Calu3 (cell line): ENCODE measurements at regions of chr3 and their contacts with region 1.

Region 1: DNA sequence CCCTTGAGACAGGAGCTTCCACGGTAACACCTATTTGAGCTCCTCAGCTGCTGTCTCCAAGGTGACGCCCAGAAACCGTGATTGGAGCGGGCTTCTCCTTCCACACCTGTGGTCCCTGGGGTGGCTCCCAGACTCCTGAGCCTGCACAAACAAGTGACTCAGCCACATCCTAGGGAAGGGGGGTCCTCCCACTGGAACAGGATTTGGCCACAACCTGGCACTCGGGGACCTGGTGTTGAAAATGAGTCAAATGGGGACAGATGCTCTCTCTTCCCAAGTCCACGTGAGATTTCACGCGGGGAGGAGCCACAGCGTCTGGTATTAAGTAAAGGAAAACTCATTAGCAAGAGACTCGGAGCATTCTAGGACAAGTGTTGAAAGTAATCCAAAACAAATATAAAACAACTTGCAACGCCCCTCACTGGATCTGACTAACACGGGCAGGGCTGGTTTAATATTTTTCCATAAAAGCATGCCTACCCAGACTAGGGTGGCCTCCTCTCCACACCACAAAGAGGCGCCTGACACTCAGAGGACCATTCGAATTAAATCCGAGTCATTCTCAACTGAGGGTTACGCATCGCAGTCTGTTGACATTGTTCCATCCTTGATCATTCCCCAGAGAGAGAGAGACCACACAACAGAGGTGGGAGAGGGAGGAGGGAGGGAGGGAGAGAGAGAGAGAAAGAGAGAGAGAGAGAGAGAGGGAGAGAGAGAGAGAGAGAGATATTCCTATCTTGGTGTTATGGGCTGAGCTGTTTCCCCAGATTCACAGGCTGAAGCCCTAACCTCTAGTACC is 74.4 kb downstream of the MGLL start:
- DNase-seq: peak; percentile 80
- H3K4me3 Mint-ChIP-seq: peak overlapping the region; percentile 29
- H3K27ac Mint-ChIP-seq: peak overlapping the region; percentile 83
- H3K4me1 Mint-ChIP-seq: peaks cover 62% of the 10 kb centered on the region
- H3K27me3 Mint-ChIP-seq: no peaks in the 10 kb centered on the region
- CTCF ChIP-seq: no peak

Region 2: DNA sequence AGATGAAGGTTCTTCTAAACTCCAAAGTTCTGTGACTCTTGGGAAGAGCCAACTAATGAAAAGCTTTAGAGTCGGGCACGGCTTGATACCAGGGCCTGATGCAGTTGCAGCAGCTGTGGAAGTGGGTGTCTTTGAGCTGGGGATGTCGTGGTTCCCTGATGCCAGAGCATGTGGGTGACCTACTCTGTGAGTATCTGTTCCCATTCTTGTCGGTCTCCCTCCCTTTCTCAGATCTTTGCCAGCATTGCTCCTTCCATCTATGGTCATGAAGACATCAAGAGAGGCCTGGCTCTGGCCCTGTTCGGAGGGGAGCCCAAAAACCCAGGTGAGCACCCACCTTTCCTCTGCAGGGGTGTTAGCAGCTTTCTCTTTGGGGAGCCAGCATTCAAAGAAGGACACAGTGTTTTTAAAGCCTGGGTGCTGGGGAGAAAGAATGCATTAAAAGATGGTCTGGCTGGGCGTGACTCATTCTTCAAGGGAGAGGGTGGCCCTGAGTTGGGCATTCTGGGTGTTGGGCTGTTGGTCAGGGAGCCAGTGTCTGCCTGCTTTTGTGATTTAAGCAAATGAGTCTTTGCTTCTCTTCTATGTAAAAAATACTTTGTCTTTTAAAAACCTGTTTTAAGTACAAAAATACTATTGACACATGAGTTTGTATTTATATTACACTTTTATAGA is 132.2 kb before region 1 on chr3:
- CTCF ChIA-PET with region 1: no interaction called
- intact Hi-C with region 1: no loop called
- DNase-seq: no peak
- H3K4me3 Mint-ChIP-seq: no peak overlapping the region
- H3K27ac Mint-ChIP-seq: peak overlapping the region; percentile 13
- H3K4me1 Mint-ChIP-seq: peaks cover 8% of the 10 kb centered on the region
- H3K27me3 Mint-ChIP-seq: no peaks in the 10 kb centered on the region
- CTCF ChIP-seq: no peak

Region 3: GRCh38 chr3:127697551-127698240 is 50.2 kb before region 1 on chr3:
- CTCF ChIA-PET with region 1: interaction called, 6 read pairs
- intact Hi-C with region 1: loop called (anchors 5 kb)
- DNase-seq: peak; percentile 73
- H3K4me3 Mint-ChIP-seq: no peak overlapping the region
- H3K27ac Mint-ChIP-seq: peak overlapping the region; percentile 19
- H3K4me1 Mint-ChIP-seq: no peaks in the 10 kb centered on the region
- H3K27me3 Mint-ChIP-seq: no peaks in the 10 kb centered on the region
- CTCF ChIP-seq: no peak

Region 4: GRCh38 chr3:127817396-127817841 is 69.5 kb after region 1 on chr3:
- CTCF ChIA-PET with region 1: interaction called, 3 read pairs
- intact Hi-C with region 1: loop called (anchors 2 kb)
- DNase-seq: peak; percentile 77
- H3K4me3 Mint-ChIP-seq: peak overlapping the region; percentile 39
- H3K27ac Mint-ChIP-seq: peak overlapping the region; percentile 84
- H3K4me1 Mint-ChIP-seq: peaks cover 83% of the 10 kb centered on the region
- H3K27me3 Mint-ChIP-seq: no peaks in the 10 kb centered on the region
- CTCF ChIP-seq: no peak